Vagina (tissue), 2 donors: ENCODE measurements at regions of chr7 and their contacts with region 1.

Region 1: GRCh38 chr7:40057292-40057691 is 77.1 kb downstream of the MPLKIP start:
- DNase-seq: no peak
- H3K4me3 ChIP-seq: no peak overlapping the region
- H3K27ac ChIP-seq: no peak overlapping the region
- H3K4me1 ChIP-seq: no peaks in the 10 kb centered on the region
- H3K27me3 ChIP-seq: no peaks in the 10 kb centered on the region
- CTCF ChIP-seq: no peak
- POLR2A ChIP-seq: no peak

Region 2: GRCh38 chr7:39894904-39895303 is 162.4 kb before region 1 on chr7:
- intact Hi-C with region 1: loop called (anchors 10 kb)
- DNase-seq: peak; percentile 42 to 43
- H3K4me3 ChIP-seq: no peak overlapping the region
- H3K27ac ChIP-seq: no peak overlapping the region
- H3K4me1 ChIP-seq: no peaks in the 10 kb centered on the region
- H3K27me3 ChIP-seq: no peaks in the 10 kb centered on the region
- CTCF ChIP-seq: no peak
- POLR2A ChIP-seq: no peak

Region 3: GRCh38 chr7:39949980-39950472 is 107.3 kb before region 1 on chr7 and contains the start of gene CDK13:
- intact Hi-C with region 1: loop called (anchors 10 kb)
- DNase-seq: peak in 1 of 2 donors; percentile 88
- H3K4me3 ChIP-seq: peak within 1 kb of the TSS; percentile 69 to 74
- H3K27ac ChIP-seq: peak within 1 kb of the TSS; percentile 94
- H3K4me1 ChIP-seq: peaks cover 36% of the 10 kb centered on the region
- H3K27me3 ChIP-seq: no peaks in the 10 kb centered on the region
- CTCF ChIP-seq: no peak
- POLR2A ChIP-seq: no peak
- total RNA-seq, gene CDK13: 87.4 TPM

Region 4: DNA sequence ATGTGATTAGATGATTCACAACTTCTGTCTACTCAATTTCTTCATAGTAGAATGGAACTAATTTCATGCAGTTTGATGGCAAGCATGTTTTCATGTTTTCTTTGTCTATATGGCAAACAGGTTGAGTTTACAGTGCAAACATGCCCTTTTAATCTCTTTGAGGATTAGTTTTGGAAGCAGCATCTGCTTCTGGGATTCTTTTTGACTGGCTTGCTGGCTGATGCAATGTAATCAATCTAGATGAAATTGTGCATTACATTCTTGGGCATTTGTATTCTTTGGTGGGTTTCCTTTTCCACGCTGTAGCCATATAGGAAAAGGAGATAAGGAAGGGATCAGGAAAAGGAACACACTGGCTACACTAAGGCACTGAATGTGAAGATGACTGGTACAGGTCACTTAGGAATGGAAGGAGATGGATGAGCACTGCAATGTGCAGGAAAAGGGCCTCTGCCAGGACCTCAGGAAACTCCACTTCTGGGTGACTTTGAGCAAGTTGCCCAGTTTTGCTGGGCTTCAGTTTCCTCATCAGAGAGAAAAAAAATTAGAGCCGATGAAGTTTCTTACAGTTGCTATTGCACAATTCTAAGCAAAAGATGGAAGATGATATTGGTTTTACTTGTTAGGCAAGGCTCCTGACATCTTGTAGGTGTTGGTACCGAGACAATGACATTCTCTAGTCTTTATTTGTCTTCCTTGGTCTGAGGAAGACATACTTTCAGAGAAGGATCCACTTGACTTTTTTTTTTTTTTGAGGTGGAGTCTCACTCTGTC is 346.6 kb after region 1 on chr7:
- intact Hi-C with region 1: no loop called
- DNase-seq: no peak
- H3K4me3 ChIP-seq: no peak overlapping the region
- H3K27ac ChIP-seq: no peak overlapping the region
- H3K4me1 ChIP-seq: no peaks in the 10 kb centered on the region
- H3K27me3 ChIP-seq: no peaks in the 10 kb centered on the region
- CTCF ChIP-seq: no peak
- POLR2A ChIP-seq: no peak